ENCODE measurements at regions of chrX and their contacts with region 1.

Region 1: GRCh38 chrX:65985922-65986588 is 53.8 kb downstream of the VSIG4 start:
- DNase-seq: no peak

Region 2: GRCh38 chrX:65581661-65582339 is 404.3 kb before region 1 on chrX:
- intact Hi-C with region 1: loop called (anchors 2 kb)
- DNase-seq: no peak

Region 3: GRCh38 chrX:65595460-65595876 is 390.6 kb before region 1 on chrX:
- intact Hi-C with region 1: loop called (anchors 5 kb)
- DNase-seq: peak; percentile 96

Region 4: GRCh38 chrX:65723706-65724105 is 262.3 kb before region 1 on chrX:
- intact Hi-C with region 1: loop called (anchors 10 kb)
- DNase-seq: no peak

Region 5: DNA sequence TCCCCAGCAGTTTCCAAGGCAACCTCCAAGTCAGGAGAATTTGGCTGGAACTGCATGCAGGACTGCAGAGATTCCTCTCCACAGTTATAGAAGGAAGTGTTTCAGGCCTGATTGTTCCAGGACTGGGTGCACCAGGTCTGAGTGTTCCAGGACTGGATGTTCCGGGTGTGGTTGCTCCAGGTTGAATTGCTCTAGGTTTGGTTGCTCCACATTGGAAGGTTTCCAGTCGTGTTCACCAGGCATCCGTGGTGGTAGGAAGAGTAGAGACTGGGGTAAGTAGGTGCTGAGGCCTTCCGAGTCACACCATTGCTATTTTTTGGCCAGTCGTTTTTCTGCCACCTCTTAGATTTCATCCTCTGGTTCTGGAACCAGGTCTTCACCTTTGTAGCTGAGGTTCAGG is 213.2 kb before region 1 on chrX:
- intact Hi-C with region 1: no loop called
- DNase-seq: no peak

Measured in cardiac septum (tissue), 1 donor.